ENCODE measurements at regions of chr16 and their contacts with region 1.

Region 1: DNA sequence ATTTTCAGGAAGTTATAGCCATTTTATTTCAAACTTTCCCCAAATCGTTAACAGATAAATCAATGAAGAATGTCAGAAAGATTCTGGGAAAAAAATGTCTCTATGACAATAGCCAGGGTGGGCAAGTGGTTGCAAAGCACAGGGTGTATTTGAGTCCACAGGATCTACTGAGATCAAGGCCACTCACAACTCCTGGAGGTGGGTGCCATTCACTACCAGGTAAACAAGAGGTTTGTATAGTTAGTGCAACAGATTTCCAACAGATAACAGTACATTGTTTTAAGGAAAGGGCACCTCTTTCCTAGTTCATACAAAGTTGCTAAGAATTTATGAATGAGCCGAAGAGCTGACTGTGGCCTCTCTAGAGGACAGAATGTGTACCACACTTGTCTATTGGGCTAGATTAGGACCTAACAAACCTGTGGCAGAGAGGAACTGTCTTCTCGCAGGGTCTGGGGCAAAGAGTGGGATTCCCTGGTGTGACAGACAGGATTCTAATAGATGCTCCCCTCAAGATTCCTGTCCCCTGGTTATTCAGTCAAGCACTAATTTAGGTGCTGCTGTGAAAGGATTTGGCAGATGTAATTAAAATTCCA is 52.0 kb upstream of the ZNF629 start:
- H3K4me3 ChIP-seq: no peak overlapping the region
- H3K27ac ChIP-seq: no peak overlapping the region
- H3K4me1 ChIP-seq: no peaks in the 10 kb centered on the region
- CTCF ChIP-seq: no peak

Region 2: GRCh38 chr16:30786936-30787612 is 51.9 kb before region 1 on chr16 and contains the start of gene ZNF629:
- CTCF ChIA-PET with region 1: no interaction called
- POLR2A ChIA-PET with region 1: no interaction called
- H3K4me3 ChIP-seq: peak within 1 kb of the TSS; percentile 96
- H3K27ac ChIP-seq: peak within 1 kb of the TSS; percentile 83
- H3K4me1 ChIP-seq: peaks cover 3% of the 10 kb centered on the region; the same call in 1 of the 2 replicates
- CTCF ChIP-seq: peak; percentile 47; the same call in 1 of the 2 replicates

Region 3: DNA sequence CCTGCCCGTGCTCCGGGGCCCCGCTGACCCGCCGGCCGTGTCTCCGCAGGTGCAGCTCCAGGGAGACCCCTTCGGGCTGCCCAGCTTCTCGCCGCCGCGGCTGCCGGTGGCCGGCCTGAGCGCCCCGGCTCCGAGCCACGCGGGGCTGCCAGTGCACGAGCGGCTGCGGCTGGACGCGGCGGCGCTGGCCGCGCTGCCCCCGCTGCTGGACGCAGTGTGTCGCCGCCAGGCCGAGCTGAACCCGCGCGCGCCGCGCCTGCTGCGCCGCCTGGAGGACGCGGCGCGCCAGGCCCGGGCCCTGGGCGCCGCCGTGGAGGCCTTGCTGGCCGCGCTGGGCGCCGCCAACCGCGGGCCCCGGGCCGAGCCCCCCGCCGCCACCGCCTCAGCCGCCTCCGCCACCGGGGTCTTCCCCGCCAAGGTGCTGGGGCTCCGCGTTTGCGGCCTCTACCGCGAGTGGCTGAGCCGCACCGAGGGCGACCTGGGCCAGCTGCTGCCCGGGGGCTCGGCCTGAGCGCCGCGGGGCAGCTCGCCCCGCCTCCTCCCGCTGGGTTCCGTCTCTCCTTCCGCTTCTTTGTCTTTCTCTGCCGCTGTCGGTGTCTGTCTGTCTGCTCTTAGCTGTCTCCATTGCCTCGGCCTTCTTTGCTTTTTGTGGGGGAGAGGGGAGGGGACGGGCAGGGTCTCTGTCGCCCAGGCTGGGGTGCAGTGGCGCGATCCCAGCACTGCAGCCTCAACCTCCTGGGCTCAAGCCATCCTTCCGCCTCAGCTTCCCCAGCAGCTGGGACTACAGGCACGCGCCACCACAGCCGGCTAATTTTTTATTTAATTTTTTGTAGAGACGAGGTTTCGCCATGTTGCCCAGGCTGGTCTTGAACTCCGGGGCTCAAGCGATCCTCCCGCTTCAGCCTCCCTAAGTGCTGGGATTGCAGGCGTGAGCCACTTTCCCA is 63.3 kb after region 1 on chr16:
- CTCF ChIA-PET with region 1: interaction called, 66 read pairs
- POLR2A ChIA-PET with region 1: no interaction called
- H3K4me3 ChIP-seq: peak overlapping the region; percentile 51
- H3K27ac ChIP-seq: peak overlapping the region; percentile 77
- H3K4me1 ChIP-seq: no peaks in the 10 kb centered on the region
- CTCF ChIP-seq: peak; percentile 19; the same call in 1 of the 2 replicates